Right lobe of liver (tissue), 6 donors: ENCODE measurements at regions of chr11 and their contacts with region 1.

Region 1: DNA sequence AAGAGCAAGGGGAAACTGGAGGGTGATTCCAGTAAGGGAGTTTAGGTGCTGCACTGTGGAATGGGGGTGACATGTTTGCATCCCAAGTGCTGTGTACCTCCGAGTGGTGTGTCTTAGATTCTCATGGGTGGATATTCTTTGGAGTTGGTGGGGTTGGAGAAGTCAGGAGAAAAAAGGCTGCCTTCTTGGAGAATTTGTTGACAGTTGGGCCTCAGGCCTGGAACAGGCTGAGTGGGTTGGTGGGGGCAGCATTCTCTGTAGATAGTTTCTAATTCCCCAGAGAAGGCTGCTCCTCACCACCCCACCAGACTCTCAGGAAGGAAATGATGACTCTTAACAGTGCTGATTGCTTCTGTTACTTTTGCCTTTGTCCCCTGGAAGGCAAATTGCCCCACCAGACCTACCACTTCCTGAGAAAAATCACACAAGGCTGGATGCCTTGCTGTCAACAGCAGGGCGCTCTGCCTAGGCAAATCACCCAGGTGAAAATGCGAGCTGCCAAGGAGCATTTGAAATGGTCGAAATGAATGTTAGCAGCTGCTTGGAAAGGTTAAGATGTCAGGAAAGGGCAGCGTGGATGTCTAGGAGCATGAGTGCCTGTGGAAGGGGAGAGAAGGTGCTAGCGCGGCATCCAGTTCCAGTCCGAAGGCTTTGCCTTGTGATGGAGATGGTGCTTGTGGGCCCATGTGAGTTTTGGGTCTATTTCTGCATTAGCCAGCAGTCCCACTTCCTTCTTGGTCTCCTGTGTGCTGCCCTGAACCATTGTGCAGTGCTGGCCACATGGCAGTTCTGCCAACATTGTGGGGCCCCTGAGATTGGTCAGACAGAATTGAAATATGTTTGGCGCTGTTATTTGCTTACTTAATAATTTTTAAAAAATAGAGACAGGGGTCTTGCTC is 29.7 kb upstream of the SORL1-AS1 start:
- DNase-seq: no peak
- ATAC-seq: peak; percentile 41 to 53 (median 46)
- H3K4me3 ChIP-seq: no peak overlapping the region
- H3K27ac ChIP-seq: no peak overlapping the region
- H3K4me1 ChIP-seq: peaks cover 0 to 6% (median 3%) of the 10 kb centered on the region in 4 donors
- H3K27me3 ChIP-seq: no peaks in the 10 kb centered on the region
- CTCF ChIP-seq: no peak
- POLR2A ChIP-seq: no peak

Region 2: GRCh38 chr11:121383716-121384115 is 98.8 kb before region 1 on chr11:
- intact Hi-C with region 1: no loop called
- DNase-seq: no peak
- ATAC-seq: no peak
- H3K4me3 ChIP-seq: no peak overlapping the region
- H3K27ac ChIP-seq: no peak overlapping the region
- H3K4me1 ChIP-seq: no peaks in the 10 kb centered on the region
- H3K27me3 ChIP-seq: no peaks in the 10 kb centered on the region
- CTCF ChIP-seq: no peak
- POLR2A ChIP-seq: no peak

Region 3: DNA sequence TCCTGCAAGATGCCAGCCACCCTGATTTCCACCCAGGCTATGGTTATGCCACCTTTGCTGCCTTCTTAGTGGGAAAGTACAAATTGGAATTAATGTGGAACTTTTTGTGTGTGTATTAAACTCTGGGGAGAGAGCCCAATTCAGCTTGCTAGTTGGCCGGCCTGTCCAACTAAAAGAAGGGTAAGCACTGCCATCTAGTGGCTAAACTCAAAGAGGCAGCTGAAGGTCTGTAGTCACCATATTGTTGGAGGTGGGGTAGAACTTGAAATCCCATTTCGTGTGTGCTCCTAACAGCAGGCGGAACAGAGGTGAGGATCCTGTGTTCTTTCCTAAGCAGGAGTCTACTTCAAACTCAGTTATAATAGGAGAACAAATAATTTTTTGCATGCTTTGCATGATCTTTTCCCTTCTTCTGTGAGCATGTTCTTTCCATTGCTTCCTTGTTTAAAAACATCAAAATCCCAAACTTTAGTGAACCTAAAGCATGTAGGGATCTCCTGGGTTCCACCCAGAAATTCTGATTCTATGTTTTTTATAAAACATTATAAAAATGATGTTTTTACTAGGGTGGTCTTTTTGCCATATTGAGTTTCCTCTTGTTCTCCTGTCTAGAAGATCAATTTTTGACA is 109.0 kb after region 1 on chr11:
- intact Hi-C with region 1: loop called in 1 of 2 experiments (anchors 10 kb)
- DNase-seq: peak in 1 of 3 donors; percentile 69
- ATAC-seq: peak; percentile 68 to 79 (median 71)
- H3K4me3 ChIP-seq: no peak overlapping the region
- H3K27ac ChIP-seq: peak overlapping the region in 1 of 3 donors; percentile 29
- H3K4me1 ChIP-seq: peaks cover 0 to 28% (median 6%) of the 10 kb centered on the region in 4 donors
- H3K27me3 ChIP-seq: no peaks in the 10 kb centered on the region
- CTCF ChIP-seq: peak; percentile 87 to 93 (median 91)
- POLR2A ChIP-seq: no peak

Region 4: GRCh38 chr11:121610706-121611105 is 128.2 kb after region 1 on chr11:
- intact Hi-C with region 1: no loop called
- DNase-seq: no peak
- ATAC-seq: no peak
- H3K4me3 ChIP-seq: no peak overlapping the region
- H3K27ac ChIP-seq: no peak overlapping the region
- H3K4me1 ChIP-seq: no peaks in the 10 kb centered on the region
- H3K27me3 ChIP-seq: no peaks in the 10 kb centered on the region
- CTCF ChIP-seq: no peak
- POLR2A ChIP-seq: no peak